ENCODE measurements at regions of chr17 and their contacts with region 1.

Region 1: DNA sequence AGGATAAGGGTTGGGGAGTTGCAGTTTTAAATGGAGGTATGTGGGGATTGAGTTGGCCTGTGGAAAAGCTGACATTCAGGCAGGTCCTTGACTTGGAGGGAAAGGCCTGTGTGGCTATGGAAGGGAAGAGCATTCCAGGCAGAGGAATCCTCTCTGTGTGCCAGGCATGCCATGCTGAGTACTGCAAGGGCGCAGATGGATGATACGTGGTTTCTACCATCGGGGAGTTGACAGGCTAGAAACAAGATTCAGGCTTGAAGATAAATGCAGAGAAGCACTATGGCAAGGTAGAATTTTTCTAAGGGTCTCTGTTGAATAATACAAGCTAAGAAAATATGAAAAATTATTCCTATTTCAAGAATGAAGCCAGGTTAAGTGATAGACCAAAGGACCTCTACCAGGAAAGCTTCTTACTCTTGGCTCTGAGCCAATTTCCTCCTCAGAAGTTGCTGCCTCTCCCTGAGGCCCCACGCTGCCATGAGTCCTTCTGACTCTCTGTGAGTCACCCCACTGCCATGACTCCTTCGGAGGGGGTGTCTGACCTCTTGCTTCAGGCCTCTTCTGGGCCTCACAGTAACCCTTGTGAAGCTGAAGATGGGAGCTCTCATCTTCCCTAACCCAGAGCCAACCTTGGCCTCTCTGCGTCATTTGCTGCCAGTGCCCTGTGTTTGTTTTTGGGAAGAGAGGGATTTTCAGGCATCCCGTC is 75.8 kb downstream of the WNT3 start:
- DNase-seq: no peak
- CTCF ChIP-seq: no peak

Region 2: GRCh38 chr17:46809110-46809571 is 66.4 kb after region 1 on chr17:
- in situ Hi-C with region 1: loop called (anchors 10 kb)
- DNase-seq: no peak
- CTCF ChIP-seq: no peak

Measured in GM13976 (cell line).